Activated CD8-positive, alpha-beta T cell treated with anti-CD3 and anti-CD28 coated beads, Interleukin-2, amount 10 ng/mL, durations not matched to agents 7 days and 5 days (primary cell): ENCODE measurements at regions of chr21 and their contacts with region 1.

Region 1: DNA sequence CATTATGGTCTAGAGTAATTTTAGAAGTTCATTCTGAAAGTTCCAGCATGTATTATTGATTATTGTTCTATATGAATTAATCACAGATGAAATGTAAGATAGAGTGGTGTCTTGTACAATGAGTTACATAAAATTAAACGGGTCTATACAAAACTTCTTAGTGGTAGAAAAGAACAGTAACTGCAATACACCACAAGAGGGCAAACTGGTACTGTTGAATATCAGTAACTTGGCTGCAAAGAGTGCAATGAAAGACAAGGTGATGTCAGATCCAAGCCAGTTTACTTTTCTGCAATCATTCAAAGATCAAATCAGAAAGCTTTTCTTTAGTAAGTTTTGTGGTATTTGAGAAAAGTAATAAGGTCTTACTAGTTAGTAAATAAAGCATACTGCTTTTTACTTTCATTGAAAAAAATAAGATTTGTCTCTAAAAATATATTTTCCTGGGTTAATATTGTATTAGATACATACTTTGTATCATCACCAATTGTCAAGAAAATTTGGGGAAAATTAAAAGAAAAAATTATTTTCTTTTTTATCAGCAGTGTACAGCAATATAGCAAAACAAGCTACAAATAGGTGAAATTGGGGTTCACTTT is 66.4 kb upstream of the BTG3 start:
- DNase-seq: peak; percentile 40
- ATAC-seq: peak; percentile 90
- H3K4me3 Mint-ChIP-seq: no peak overlapping the region
- H3K27ac Mint-ChIP-seq: no peak overlapping the region
- H3K4me1 Mint-ChIP-seq: peaks cover 4% of the 10 kb centered on the region
- H3K27me3 Mint-ChIP-seq: no peaks in the 10 kb centered on the region

Region 2: GRCh38 chr21:17708522-17709265 is 29.6 kb after region 1 on chr21:
- CTCF ChIA-PET with region 1: no interaction called
- POLR2A ChIA-PET with region 1: no interaction called
- DNase-seq: no peak
- ATAC-seq: peak; percentile 15
- H3K4me3 Mint-ChIP-seq: no peak overlapping the region
- H3K27ac Mint-ChIP-seq: peak overlapping the region; percentile 9
- H3K4me1 Mint-ChIP-seq: peaks cover 28% of the 10 kb centered on the region
- H3K27me3 Mint-ChIP-seq: no peaks in the 10 kb centered on the region

Region 3: GRCh38 chr21:17726047-17726830 is 47.1 kb after region 1 on chr21:
- CTCF ChIA-PET with region 1: no interaction called
- POLR2A ChIA-PET with region 1: no interaction called
- DNase-seq: no peak
- ATAC-seq: no peak
- H3K4me3 Mint-ChIP-seq: no peak overlapping the region
- H3K27ac Mint-ChIP-seq: no peak overlapping the region
- H3K4me1 Mint-ChIP-seq: no peaks in the 10 kb centered on the region
- H3K27me3 Mint-ChIP-seq: no peaks in the 10 kb centered on the region

Region 4: GRCh38 chr21:17903029-17903806 is 224.1 kb after region 1 on chr21:
- CTCF ChIA-PET with region 1: interaction called, 11 read pairs
- POLR2A ChIA-PET with region 1: no interaction called
- DNase-seq: no peak
- ATAC-seq: peak; percentile 57
- H3K4me3 Mint-ChIP-seq: no peak overlapping the region
- H3K27ac Mint-ChIP-seq: no peak overlapping the region
- H3K4me1 Mint-ChIP-seq: peaks cover 11% of the 10 kb centered on the region
- H3K27me3 Mint-ChIP-seq: no peaks in the 10 kb centered on the region

Region 5: DNA sequence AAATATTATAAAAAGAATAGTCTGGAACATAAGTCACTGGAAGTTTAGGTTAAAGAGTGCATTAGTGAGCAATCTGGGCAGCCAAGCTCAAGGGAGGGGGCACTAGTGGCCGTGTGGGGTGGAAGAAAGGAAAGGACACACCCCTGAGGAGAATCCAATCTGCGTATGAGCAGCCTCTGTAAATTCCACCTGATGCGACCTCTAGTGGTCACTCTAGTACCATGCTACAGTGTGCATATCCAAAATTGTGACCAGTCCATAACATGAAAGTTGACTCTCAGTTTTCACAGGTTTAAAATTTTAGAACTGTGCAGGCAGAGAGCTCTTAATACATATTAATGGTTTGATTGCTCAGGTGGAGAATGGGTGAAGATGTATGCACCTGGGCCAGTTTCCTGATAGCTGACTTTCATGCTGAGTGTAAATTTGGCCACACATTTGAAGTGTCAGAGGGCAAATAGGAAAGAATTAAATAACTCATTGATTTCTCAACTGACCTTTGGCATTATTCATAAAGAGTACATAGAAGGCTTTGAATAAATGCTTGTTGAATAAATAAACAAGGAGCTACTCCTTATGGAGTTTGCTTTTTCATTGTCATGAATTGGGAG is 246.0 kb after region 1 on chr21:
- CTCF ChIA-PET with region 1: interaction called, 67 read pairs
- POLR2A ChIA-PET with region 1: no interaction called
- DNase-seq: peak; percentile 72
- ATAC-seq: peak; percentile 98
- H3K4me3 Mint-ChIP-seq: no peak overlapping the region
- H3K27ac Mint-ChIP-seq: no peak overlapping the region
- H3K4me1 Mint-ChIP-seq: peaks cover 3% of the 10 kb centered on the region
- H3K27me3 Mint-ChIP-seq: peaks cover 10% of the 10 kb centered on the region